ENCODE measurements at regions of chr9 and their contacts with region 1.

Region 1: DNA sequence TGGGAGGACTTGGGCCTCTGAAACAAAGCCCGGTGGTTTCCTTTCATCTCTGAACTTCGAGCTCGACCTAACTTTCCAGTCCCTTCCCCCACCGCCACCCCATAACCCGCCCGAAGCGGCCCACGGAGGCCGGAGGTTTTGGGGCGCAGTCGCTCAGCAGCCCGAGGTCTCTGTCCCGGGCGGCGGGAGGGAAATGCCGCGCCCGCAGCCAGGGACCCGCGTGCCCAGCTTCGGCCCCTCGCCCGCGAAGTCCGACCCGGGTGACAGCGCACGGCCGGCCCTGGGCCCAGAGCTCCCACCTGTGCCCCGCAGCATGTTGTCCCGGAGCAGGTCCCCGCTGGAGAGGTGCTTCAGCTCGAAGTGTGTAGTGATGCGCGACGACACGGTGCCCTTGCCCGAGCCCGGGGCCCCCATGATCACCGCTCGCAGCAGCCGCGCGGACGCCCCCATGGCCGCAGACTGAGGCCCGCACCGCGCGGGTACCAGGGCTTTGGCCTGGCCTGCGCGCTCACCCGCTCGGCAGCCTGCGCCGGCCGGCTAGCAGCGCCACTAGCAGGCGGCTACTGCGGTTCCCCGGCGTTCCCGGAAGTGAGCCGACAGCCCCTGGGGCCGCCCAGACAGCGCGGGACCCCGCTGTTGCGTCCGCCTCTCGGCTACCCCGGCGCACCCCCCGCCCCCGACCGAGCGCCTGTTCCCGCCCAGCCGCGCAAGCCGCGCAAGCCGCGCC is at the start of gene AK3:
- DNase-seq: peak; percentile 72 to 85 (median 83)
- ATAC-seq: peak; percentile 95
- H3K4me3 ChIP-seq: peak within 1 kb of the TSS; percentile 73
- H3K4me3 Mint-ChIP-seq: peak within 1 kb of the TSS; percentile 88 to 99 (median 94)
- H3K27ac ChIP-seq: peak within 1 kb of the TSS; percentile 86
- H3K27ac Mint-ChIP-seq: peak within 1 kb of the TSS; percentile 86 to 98 (median 93)
- H3K4me1 ChIP-seq: peaks cover 10 to 16% of the 10 kb centered on the region in 2 donors
- H3K4me1 Mint-ChIP-seq: peaks cover 22 to 49% (median 40%) of the 10 kb centered on the region in 7 donors
- H3K27me3 ChIP-seq: no peaks in the 10 kb centered on the region
- H3K27me3 Mint-ChIP-seq: no peaks in the 10 kb centered on the region
- total RNA-seq, gene AK3: 18.0 to 34.8 (median 25.8) TPM

Region 2: DNA sequence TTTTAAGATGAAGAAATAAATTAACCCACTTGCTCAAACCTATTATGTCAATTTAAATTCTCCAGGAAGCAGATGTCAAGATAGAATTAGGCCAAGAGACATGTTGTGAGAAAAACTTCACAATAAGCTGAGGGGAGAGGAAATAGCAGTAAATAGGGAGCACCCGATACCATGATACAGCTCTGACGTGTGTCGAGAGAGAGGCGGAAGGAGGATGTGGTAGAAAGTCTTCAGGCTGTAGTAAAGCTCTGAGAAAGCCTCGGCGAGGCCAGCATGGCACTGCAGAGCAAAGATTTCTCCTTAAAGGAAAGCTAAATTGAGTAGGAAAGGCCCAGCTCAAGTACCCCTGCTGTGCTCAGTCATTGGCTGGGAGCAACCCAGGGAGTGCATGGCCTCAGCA is 1890.9 kb before region 1 on chr9:
- CTCF ChIA-PET with region 1: no interaction called
- POLR2A ChIA-PET with region 1: no interaction called
- intact Hi-C with region 1: loop called in 1 of 2 experiments (anchors 2 kb)
- DNase-seq: peak in 3 of 9 donors; percentile 22 to 34 (median 29)
- ATAC-seq: peak; percentile 79
- H3K4me3 ChIP-seq: no peak overlapping the region
- H3K4me3 Mint-ChIP-seq: no peak overlapping the region
- H3K27ac ChIP-seq: no peak overlapping the region
- H3K27ac Mint-ChIP-seq: peak overlapping the region in 4 of 9 donors; percentile 17 to 82 (median 42)
- H3K4me1 ChIP-seq: peaks cover 5% of the 10 kb centered on the region in 2 donors
- H3K4me1 Mint-ChIP-seq: peaks cover 5 to 16% (median 9%) of the 10 kb centered on the region in 7 donors
- H3K27me3 ChIP-seq: no peaks in the 10 kb centered on the region
- H3K27me3 Mint-ChIP-seq: peaks cover 1 to 17% (median 13%) of the 10 kb centered on the region in 5 donors

Region 3: DNA sequence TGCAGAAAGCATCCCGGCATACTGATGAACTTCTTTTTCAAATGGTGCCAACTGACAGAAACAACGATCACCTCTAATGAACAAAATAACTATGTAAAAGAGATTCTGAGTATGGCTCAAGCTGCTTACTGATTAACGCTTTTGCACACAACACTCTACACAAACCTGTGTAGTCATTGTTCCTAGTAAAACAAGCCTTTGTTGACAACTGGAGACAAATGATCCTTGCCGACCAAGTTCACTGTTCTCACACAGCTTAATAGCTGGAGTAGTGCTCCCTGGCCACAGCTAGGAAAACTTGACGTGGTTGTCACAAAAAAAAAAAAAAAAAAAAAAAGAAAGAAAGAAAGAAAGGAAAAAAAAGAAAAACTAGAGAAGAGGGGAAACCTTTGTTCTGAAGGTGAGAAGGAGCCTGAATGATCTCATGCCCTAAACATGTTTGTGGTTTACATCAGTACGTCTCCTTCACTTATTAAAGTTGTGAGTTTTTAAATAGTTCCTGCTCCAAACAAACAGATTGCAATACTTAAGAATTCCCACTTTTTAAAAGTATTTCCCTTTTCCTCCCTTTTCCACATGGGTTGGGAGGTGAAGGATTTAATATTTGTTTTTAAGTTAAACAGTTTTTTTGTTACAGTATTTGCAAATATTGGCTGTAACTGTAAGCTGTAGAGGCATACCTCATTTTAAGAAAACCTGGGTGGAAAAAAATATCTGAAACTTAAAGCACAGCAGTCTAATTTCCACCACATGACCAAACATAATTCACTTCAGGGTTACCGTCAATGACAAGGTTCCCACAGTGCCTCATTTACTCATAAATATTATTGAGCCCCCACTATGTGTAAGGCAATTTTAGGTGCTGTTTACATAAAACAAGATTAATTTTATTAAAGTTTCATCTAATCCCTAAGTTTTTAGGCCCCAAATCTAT is 504.7 kb before region 1 on chr9:
- CTCF ChIA-PET with region 1: no interaction called
- POLR2A ChIA-PET with region 1: no interaction called
- intact Hi-C with region 1: no loop called
- DNase-seq: no peak
- ATAC-seq: no peak
- H3K4me3 ChIP-seq: no peak overlapping the region
- H3K4me3 Mint-ChIP-seq: peak overlapping the region in 2 of 10 donors; percentile 34 to 48
- H3K27ac ChIP-seq: no peak overlapping the region
- H3K27ac Mint-ChIP-seq: peak overlapping the region in 3 of 9 donors; percentile 10 to 90 (median 65)
- H3K4me1 ChIP-seq: peaks cover 0 to 9% of the 10 kb centered on the region in 2 donors
- H3K4me1 Mint-ChIP-seq: peaks cover 7 to 38% (median 30%) of the 10 kb centered on the region in 7 donors
- H3K27me3 ChIP-seq: no peaks in the 10 kb centered on the region
- H3K27me3 Mint-ChIP-seq: no peaks in the 10 kb centered on the region

Region 4: DNA sequence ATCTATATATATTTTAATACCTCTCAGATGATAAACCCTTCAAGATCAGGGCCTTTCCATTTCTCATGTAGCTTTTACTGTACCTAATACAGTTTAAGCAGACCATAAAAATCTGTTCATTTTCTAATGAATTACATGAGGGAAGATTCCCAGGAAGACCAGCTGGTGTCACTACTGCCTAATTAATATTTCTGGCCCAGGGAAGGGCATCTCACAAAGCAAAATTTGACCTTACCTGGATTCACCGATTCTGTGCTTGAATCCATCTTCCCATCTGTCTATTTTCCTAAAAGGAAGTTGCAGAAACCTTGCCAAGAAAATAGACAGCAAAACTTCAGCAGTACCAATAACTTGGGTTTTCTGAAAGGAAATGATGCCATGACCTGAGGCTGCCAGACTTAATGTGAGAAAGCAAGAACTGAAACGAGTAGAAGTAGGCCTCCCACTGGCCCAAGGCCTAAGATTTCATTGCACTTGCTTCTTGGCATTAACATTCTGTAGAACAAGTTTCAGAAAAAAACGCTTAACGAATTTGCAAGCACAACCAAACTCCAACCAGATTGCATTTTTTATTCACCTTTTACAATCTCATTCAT is 358.0 kb before region 1 on chr9:
- CTCF ChIA-PET with region 1: no interaction called
- POLR2A ChIA-PET with region 1: interaction called, 4 read pairs
- intact Hi-C with region 1: loop called (anchors 5 to 10 kb)
- DNase-seq: peak in 6 of 9 donors; percentile 7 to 54 (median 42)
- ATAC-seq: no peak
- H3K4me3 ChIP-seq: no peak overlapping the region
- H3K4me3 Mint-ChIP-seq: no peak overlapping the region
- H3K27ac ChIP-seq: no peak overlapping the region
- H3K27ac Mint-ChIP-seq: no peak overlapping the region
- H3K4me1 ChIP-seq: no peaks in the 10 kb centered on the region
- H3K4me1 Mint-ChIP-seq: peaks cover 0 to 10% (median 0%) of the 10 kb centered on the region in 7 donors
- H3K27me3 ChIP-seq: no peaks in the 10 kb centered on the region
- H3K27me3 Mint-ChIP-seq: peaks cover 0 to 4% (median 0%) of the 10 kb centered on the region in 5 donors

Region 5: DNA sequence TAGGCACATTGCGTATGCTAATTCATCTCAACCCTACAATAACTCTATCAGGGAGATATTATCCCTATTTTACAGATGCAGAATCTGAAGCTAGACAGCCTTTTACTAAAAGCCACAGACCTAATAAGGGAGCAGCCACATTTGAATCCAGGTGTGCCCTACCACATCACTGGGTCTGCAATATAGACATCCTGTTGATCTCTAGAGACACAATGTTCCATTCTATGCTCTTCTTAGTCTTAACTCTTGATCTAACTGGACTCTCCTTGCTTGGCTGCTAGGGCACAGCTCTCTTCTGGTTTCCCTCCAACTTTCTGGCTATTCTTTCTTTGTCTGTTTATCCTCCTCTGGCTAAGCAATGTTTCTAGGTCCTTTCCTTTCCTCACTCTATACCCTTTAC is 73.1 kb before region 1 on chr9:
- CTCF ChIA-PET with region 1: interaction called, 3 read pairs
- POLR2A ChIA-PET with region 1: interaction called, 29 read pairs
- intact Hi-C with region 1: loop called (anchors 1 kb)
- DNase-seq: peak in 7 of 9 donors; percentile 51 to 80 (median 73)
- ATAC-seq: peak; percentile 72
- H3K4me3 ChIP-seq: no peak overlapping the region
- H3K4me3 Mint-ChIP-seq: peak overlapping the region in 8 of 10 donors; percentile 33 to 98 (median 76)
- H3K27ac ChIP-seq: peak overlapping the region; percentile 35
- H3K27ac Mint-ChIP-seq: peak overlapping the region in 8 of 9 donors; percentile 84 to 96 (median 94)
- H3K4me1 ChIP-seq: peaks cover 17 to 53% of the 10 kb centered on the region in 2 donors
- H3K4me1 Mint-ChIP-seq: peaks cover 45 to 77% (median 68%) of the 10 kb centered on the region in 7 donors
- H3K27me3 ChIP-seq: no peaks in the 10 kb centered on the region
- H3K27me3 Mint-ChIP-seq: peaks cover 0 to 3% (median 0%) of the 10 kb centered on the region in 5 donors

Region 6: GRCh38 chr9:4725706-4726442 is 14.9 kb before region 1 on chr9:
- CTCF ChIA-PET with region 1: interaction called, 3 read pairs
- POLR2A ChIA-PET with region 1: no interaction called
- intact Hi-C with region 1: loop called in 1 of 2 experiments (anchors 2 kb)
- DNase-seq: no peak
- ATAC-seq: no peak
- H3K4me3 ChIP-seq: no peak overlapping the region
- H3K4me3 Mint-ChIP-seq: no peak overlapping the region
- H3K27ac ChIP-seq: no peak overlapping the region
- H3K27ac Mint-ChIP-seq: peak overlapping the region in 2 of 9 donors; percentile 43 to 62
- H3K4me1 ChIP-seq: no peaks in the 10 kb centered on the region
- H3K4me1 Mint-ChIP-seq: peaks cover 3 to 35% (median 25%) of the 10 kb centered on the region in 7 donors
- H3K27me3 ChIP-seq: no peaks in the 10 kb centered on the region
- H3K27me3 Mint-ChIP-seq: no peaks in the 10 kb centered on the region